HEK293 (cell line): ENCODE measurements at regions of chrX and their contacts with region 1.

Region 1: GRCh38 chrX:140733769-140734342 is 24.3 kb downstream of the LINC00632 start:
- H3K4me3 ChIP-seq: no peak overlapping the region
- H3K27ac ChIP-seq: no peak overlapping the region
- H3K4me1 ChIP-seq: no peaks in the 10 kb centered on the region
- CTCF ChIP-seq: peak; percentile 61

Region 2: GRCh38 chrX:140701480-140701879 is 32.4 kb before region 1 on chrX:
- CTCF ChIA-PET with region 1: interaction called, 16 read pairs
- POLR2A ChIA-PET with region 1: no interaction called
- H3K4me3 ChIP-seq: no peak overlapping the region
- H3K27ac ChIP-seq: no peak overlapping the region
- H3K4me1 ChIP-seq: no peaks in the 10 kb centered on the region
- CTCF ChIP-seq: no peak